ENCODE measurements at regions of chr3 and their contacts with region 1.

Region 1: GRCh38 chr3:8622873-8623691 is 21.5 kb downstream of the SSUH2 start:
- DNase-seq: peak; percentile 54 to 74
- H3K4me3 ChIP-seq: no peak overlapping the region
- H3K27ac ChIP-seq: no peak overlapping the region
- H3K4me1 ChIP-seq: peaks cover 0 to 2% of the 10 kb centered on the region in 2 donors
- H3K27me3 ChIP-seq: no peaks in the 10 kb centered on the region
- CTCF ChIP-seq: peak; percentile 84 to 93 (median 88)
- POLR2A ChIP-seq: no peak

Region 2: GRCh38 chr3:8441969-8442559 is 181.0 kb before region 1 on chr3:
- intact Hi-C with region 1: loop called (anchors 5 kb)
- DNase-seq: peak in 1 of 2 donors; percentile 24
- H3K4me3 ChIP-seq: no peak overlapping the region
- H3K27ac ChIP-seq: no peak overlapping the region
- H3K4me1 ChIP-seq: no peaks in the 10 kb centered on the region
- H3K27me3 ChIP-seq: no peaks in the 10 kb centered on the region
- CTCF ChIP-seq: peak; percentile 70 to 81 (median 72)
- POLR2A ChIP-seq: no peak

Measured in uterus (tissue), 4 donors.